ENCODE measurements at regions of chr12 and their contacts with region 1.

Region 1: DNA sequence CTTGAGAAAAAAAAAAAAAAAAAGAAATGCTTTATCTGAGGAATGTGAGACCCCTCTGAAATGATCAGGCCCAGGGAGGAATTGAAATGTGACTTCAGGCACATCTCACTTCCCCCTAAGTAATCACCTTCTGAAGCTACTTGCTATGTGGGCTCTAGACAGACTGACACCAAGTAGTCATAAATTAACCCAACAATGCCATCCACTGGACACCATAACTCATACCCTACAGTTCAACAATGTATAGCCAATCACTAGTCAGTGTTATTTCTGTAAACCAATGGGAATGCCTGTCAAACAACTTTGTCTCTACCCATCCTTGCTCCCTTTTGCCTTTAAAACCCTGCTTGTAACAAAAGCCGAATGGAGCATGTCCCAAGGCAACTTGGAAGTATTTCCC is 182.7 kb upstream of the TMPO start:
- DNase-seq: peak; percentile 64
- ATAC-seq: peak; percentile 91
- H3K4me3 ChIP-seq: no peak overlapping the region
- H3K27ac ChIP-seq: no peak overlapping the region
- H3K4me1 ChIP-seq: no peaks in the 10 kb centered on the region
- H3K27me3 ChIP-seq: peaks cover 0 to 3% of the 10 kb centered on the region in 2 experiments; a peak in 1 of 4 replicates
- CTCF ChIP-seq: peak; percentile 12 to 57 (median 18); a peak in 3 of 6 replicates
- EP300 ChIP-seq: peak in 1 of 2 experiments; percentile 8; a peak in 1 of 4 replicates
- POLR2A ChIP-seq: no peak
- RAD21 ChIP-seq: no peak

Region 2: DNA sequence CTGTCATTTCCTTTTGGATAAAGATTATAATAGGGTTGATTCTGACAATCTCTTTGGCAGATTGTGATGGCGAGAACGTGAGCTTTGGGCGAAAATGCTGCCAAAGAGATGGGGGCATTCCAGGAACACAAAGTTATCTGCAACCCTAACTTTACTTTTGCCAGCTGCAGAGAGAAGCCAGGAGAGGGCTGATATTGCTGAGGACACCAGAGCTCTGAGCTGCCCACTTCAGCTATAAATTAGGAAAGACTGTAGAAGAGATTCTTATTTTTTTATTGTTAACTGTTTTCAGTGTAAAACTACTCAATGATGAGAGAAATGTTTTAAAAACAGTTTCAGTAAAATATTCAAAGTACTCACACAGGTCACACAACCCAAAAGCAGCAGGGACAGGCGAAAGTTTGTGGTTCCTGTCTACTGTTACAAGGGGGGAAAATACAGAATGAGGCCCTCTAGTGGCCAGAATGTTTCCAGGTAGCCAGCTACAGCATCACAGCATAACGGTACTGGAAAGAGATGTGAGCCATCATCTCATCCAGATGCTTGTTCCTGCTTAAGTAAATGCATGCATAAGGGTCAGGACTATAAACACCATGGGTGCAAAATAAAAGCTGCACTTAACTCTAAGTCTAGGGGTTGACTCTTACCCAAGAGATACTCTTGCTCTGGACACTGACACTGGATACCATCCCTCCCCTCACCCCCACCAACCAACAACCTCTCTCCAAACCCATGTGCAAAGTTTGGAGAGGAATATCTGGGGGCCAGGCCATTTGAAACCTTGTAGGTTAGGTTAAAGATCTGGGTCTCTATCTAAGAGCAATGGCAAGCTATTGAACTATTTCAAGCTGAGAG is 371.7 kb before region 1 on chr12:
- CTCF ChIA-PET with region 1: interaction called, 10 read pairs
- POLR2A ChIA-PET with region 1: no interaction called
- RAD21 ChIA-PET with region 1: interaction called, 3 read pairs
- SMC1A ChIA-PET with region 1: interaction called, 6 read pairs
- in situ Hi-C with region 1: no loop called
- intact Hi-C with region 1: no loop called
- DNase-seq: peak; percentile 3
- ATAC-seq: peak; percentile 96
- H3K4me3 ChIP-seq: no peak overlapping the region
- H3K27ac ChIP-seq: no peak overlapping the region
- H3K4me1 ChIP-seq: no peaks in the 10 kb centered on the region
- H3K27me3 ChIP-seq: no peaks in the 10 kb centered on the region
- CTCF ChIP-seq: peak; percentile 68 to 81 (median 80)
- EP300 ChIP-seq: no peak
- POLR2A ChIP-seq: no peak
- RAD21 ChIP-seq: peak; percentile 69

Region 3: DNA sequence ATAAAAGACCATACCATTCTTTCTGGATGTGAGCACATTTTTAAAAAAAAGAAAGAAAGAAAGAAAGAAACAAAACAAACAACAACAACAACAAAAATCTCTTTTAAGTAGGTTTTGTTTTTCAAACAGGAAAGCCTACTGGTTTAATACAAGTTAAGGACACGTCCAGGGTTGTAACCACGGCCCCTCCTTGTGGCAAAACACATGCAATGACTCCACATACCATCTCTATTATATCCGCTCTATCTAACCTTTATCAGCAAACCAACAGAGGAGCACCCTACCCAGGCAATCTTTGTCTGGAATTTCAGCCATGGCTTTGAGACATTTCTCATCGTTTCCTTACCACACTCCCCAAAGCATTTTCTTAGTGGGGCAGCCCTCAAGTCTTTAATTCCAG is 177.8 kb before region 1 on chr12:
- CTCF ChIA-PET with region 1: interaction called, 8 read pairs
- POLR2A ChIA-PET with region 1: interaction called, 4 read pairs
- RAD21 ChIA-PET with region 1: interaction called, 15 read pairs
- SMC1A ChIA-PET with region 1: interaction called, 21 read pairs
- in situ Hi-C with region 1: no loop called
- intact Hi-C with region 1: loop called (anchors 2 kb)
- DNase-seq: no peak
- ATAC-seq: peak; percentile 90
- H3K4me3 ChIP-seq: no peak overlapping the region
- H3K27ac ChIP-seq: no peak overlapping the region
- H3K4me1 ChIP-seq: no peaks in the 10 kb centered on the region
- H3K27me3 ChIP-seq: peaks cover 0 to 3% of the 10 kb centered on the region in 2 experiments; a peak in 1 of 4 replicates
- CTCF ChIP-seq: peak in 2 of 3 experiments; percentile 37 to 49; a peak in 2 of 6 replicates
- EP300 ChIP-seq: no peak
- POLR2A ChIP-seq: no peak
- RAD21 ChIP-seq: no peak

Region 4: DNA sequence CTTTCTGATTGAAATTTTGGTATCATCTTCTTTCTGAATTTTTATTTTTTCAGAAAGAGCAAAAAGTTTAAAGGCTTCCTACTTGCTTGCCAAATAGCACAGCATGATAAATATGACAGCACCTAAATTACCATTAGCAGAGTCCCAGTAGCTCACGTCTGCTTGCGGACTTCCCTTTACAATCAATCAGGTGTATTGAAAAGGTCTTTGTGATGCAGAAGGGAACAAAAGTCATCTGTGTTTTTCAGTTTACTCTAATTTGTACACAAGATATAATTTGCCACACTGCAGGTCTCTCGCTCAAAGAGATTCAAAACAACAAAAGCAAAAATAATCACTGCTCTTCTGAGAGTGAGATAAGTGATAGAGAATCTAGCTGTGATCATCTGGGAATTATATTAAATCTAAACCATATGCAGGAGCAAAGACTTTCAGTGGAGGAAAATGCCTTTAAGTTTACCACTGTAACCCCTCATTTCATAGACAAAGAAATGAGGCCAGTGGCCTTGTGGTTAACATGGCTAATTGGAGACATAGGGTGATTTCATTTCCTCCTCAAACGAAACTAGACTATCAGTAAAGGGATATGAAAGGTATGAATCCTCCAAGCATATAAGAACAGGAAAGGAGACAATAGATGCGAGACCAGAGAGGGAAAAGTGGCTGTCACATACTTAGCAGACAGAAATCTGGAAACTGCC is 58.1 kb before region 1 on chr12:
- CTCF ChIA-PET with region 1: interaction called, 4 read pairs
- POLR2A ChIA-PET with region 1: interaction called, 5 read pairs
- RAD21 ChIA-PET with region 1: interaction called, 13 read pairs
- SMC1A ChIA-PET with region 1: interaction called, 17 read pairs
- in situ Hi-C with region 1: no loop called
- intact Hi-C with region 1: loop called (anchors 2 kb)
- DNase-seq: peak; percentile 71
- ATAC-seq: peak; percentile 90
- H3K4me3 ChIP-seq: peak overlapping the region; percentile 18; the same call in 1 of the 2 replicates
- H3K27ac ChIP-seq: peak overlapping the region; percentile 50; the same call in 1 of the 2 replicates
- H3K4me1 ChIP-seq: peaks cover 15% of the 10 kb centered on the region
- H3K27me3 ChIP-seq: no peaks in the 10 kb centered on the region
- CTCF ChIP-seq: no peak
- EP300 ChIP-seq: peak; percentile 74 to 96; a peak in 3 of 4 replicates
- POLR2A ChIP-seq: no peak
- RAD21 ChIP-seq: no peak

Region 5: DNA sequence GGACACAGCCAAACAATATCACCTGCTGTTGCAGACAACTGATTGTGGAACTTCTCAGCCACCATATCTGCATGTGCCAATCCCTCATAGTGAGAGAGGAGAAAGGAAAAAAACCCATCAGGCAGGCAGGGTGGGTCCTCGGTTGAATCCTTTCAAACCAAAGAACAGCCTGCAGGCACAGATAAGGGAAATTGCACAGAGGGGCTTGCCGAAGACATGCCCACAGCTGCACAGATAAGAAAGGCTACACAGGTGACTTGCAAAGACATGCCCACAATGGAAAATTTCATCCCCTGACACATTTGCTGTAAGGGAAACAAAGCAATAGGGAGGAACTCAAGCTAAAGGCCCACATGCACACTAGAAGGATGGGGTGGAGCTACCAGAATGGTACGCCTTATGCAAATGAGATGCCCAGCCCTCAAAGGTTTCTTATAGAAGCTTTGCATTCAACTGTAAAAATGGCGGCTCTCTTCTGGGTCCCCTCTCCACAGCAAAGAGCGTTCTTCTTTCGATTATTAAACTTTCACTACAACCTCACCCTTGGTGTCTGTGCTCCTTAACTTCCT is 12.8 kb after region 1 on chr12:
- CTCF ChIA-PET with region 1: interaction called, 18 read pairs
- POLR2A ChIA-PET with region 1: interaction called, 8 read pairs
- RAD21 ChIA-PET with region 1: interaction called, 35 read pairs
- SMC1A ChIA-PET with region 1: interaction called, 80 read pairs
- in situ Hi-C with region 1: no loop called
- intact Hi-C with region 1: no loop called
- DNase-seq: no peak
- ATAC-seq: no peak
- H3K4me3 ChIP-seq: no peak overlapping the region
- H3K27ac ChIP-seq: no peak overlapping the region
- H3K4me1 ChIP-seq: peaks cover 8% of the 10 kb centered on the region; the same call in 1 of the 2 replicates
- H3K27me3 ChIP-seq: no peaks in the 10 kb centered on the region; a peak in 1 of 4 replicates
- CTCF ChIP-seq: no peak
- EP300 ChIP-seq: no peak
- POLR2A ChIP-seq: no peak
- RAD21 ChIP-seq: no peak

Region 6: DNA sequence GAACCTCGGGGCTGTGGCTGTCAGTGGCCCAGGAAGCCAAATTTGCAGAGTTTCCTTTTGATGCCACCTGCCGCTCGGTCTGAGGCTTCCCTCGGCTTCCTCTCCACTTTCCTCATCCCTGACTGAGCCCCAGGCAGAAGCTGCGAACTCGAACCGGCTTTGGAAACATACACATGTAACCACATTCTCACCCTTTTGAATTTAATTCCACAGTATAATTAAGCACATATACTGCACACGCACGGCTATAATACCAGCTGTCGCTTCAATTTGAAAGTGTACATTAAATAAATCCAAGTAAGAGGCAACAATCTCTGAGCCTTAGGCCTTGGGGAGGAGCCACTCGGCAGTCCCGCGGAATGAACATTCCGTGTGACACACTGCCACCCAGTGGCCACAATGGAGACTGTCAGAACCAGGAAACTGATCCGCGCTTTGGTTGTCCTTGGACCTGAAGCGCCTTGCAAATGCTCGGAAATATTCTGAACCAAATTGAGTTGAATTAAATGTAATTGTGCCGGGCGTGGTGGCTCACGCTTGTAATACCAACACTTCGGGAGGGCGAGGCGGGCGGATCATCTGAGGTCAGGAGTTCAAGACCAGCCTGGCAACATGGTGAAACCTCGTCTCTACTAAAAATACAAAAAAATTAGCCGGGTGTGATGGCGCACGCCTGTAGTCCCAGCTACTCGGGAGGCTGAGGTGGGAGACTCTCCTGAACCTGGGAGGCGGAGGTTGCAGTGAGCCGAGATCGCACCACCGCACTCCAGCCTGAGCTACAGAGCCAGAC is 64.9 kb after region 1 on chr12:
- CTCF ChIA-PET with region 1: interaction called, 7 read pairs
- POLR2A ChIA-PET with region 1: no interaction called
- RAD21 ChIA-PET with region 1: interaction called, 20 read pairs
- SMC1A ChIA-PET with region 1: interaction called, 6 read pairs
- in situ Hi-C with region 1: no loop called
- intact Hi-C with region 1: no loop called
- DNase-seq: peak; percentile 53
- ATAC-seq: peak; percentile 93
- H3K4me3 ChIP-seq: peak overlapping the region; percentile 63; the same call in 1 of the 2 replicates
- H3K27ac ChIP-seq: no peak overlapping the region
- H3K4me1 ChIP-seq: peaks cover 23% of the 10 kb centered on the region
- H3K27me3 ChIP-seq: no peaks in the 10 kb centered on the region
- CTCF ChIP-seq: peak; percentile 76 to 90 (median 87)
- EP300 ChIP-seq: 0 out of 4 replicates have a peak, but pooled peaks of 1 of the 2 experiments have one; percentile 13
- POLR2A ChIP-seq: no peak
- RAD21 ChIP-seq: peak; percentile 84

Region 7: GRCh38 chr12:98550803-98551202 is 218.2 kb after region 1 on chr12:
- CTCF ChIA-PET with region 1: no interaction called
- POLR2A ChIA-PET with region 1: no interaction called
- RAD21 ChIA-PET with region 1: no interaction called
- SMC1A ChIA-PET with region 1: no interaction called
- in situ Hi-C with region 1: no loop called
- intact Hi-C with region 1: no loop called
- DNase-seq: no peak
- ATAC-seq: no peak
- H3K4me3 ChIP-seq: no peak overlapping the region
- H3K27ac ChIP-seq: no peak overlapping the region
- H3K4me1 ChIP-seq: no peaks in the 10 kb centered on the region
- H3K27me3 ChIP-seq: no peaks in the 10 kb centered on the region
- CTCF ChIP-seq: no peak
- EP300 ChIP-seq: no peak
- POLR2A ChIP-seq: no peak
- RAD21 ChIP-seq: no peak

Region 8: GRCh38 chr12:99235381-99235780 is 902.7 kb after region 1 on chr12:
- CTCF ChIA-PET with region 1: no interaction called
- POLR2A ChIA-PET with region 1: no interaction called
- RAD21 ChIA-PET with region 1: no interaction called
- SMC1A ChIA-PET with region 1: no interaction called
- in situ Hi-C with region 1: no loop called
- intact Hi-C with region 1: no loop called
- DNase-seq: no peak
- ATAC-seq: no peak
- H3K4me3 ChIP-seq: no peak overlapping the region
- H3K27ac ChIP-seq: no peak overlapping the region
- H3K4me1 ChIP-seq: no peaks in the 10 kb centered on the region
- H3K27me3 ChIP-seq: no peaks in the 10 kb centered on the region
- CTCF ChIP-seq: no peak
- EP300 ChIP-seq: no peak
- POLR2A ChIP-seq: no peak
- RAD21 ChIP-seq: no peak